AG04450 (cell line): ENCODE measurements at regions of chr1 and their contacts with region 1.

Region 1: GRCh38 chr1:185720633-185721272 is 13.4 kb upstream of the HMCN1 start:
- DNase-seq: no peak
- H3K4me3 ChIP-seq: no peak overlapping the region
- H3K27ac ChIP-seq: no peak overlapping the region
- H3K27me3 ChIP-seq: no peaks in the 10 kb centered on the region
- CTCF ChIP-seq: peak; percentile 61

Region 2: DNA sequence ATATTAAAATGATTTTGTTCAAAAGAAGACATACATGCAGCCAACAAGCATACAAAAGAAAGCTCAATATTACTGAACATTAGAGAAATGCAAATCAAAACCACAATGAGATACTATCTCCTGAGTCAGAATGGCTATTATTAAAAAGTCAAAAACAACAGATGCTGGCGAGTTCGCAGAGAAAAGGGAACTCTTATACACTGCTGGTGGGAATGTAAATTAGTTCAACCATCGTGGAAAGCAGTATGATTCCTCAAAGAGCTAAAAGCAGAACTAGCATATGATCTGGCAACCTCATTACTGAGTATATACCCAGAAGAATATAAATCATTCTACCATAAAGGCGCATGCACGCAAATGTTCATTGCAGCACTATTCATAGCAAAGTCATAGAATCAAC is 112.6 kb before region 1 on chr1:
- CTCF ChIA-PET with region 1: no interaction called
- POLR2A ChIA-PET with region 1: no interaction called
- DNase-seq: no peak
- H3K4me3 ChIP-seq: no peak overlapping the region
- H3K27ac ChIP-seq: no peak overlapping the region
- H3K27me3 ChIP-seq: no peaks in the 10 kb centered on the region
- CTCF ChIP-seq: no peak

Region 3: GRCh38 chr1:185694081-185694480 is 26.7 kb before region 1 on chr1:
- CTCF ChIA-PET with region 1: interaction called, 16 read pairs
- POLR2A ChIA-PET with region 1: no interaction called
- DNase-seq: no peak
- H3K4me3 ChIP-seq: no peak overlapping the region
- H3K27ac ChIP-seq: no peak overlapping the region
- H3K27me3 ChIP-seq: no peaks in the 10 kb centered on the region
- CTCF ChIP-seq: no peak

Region 4: DNA sequence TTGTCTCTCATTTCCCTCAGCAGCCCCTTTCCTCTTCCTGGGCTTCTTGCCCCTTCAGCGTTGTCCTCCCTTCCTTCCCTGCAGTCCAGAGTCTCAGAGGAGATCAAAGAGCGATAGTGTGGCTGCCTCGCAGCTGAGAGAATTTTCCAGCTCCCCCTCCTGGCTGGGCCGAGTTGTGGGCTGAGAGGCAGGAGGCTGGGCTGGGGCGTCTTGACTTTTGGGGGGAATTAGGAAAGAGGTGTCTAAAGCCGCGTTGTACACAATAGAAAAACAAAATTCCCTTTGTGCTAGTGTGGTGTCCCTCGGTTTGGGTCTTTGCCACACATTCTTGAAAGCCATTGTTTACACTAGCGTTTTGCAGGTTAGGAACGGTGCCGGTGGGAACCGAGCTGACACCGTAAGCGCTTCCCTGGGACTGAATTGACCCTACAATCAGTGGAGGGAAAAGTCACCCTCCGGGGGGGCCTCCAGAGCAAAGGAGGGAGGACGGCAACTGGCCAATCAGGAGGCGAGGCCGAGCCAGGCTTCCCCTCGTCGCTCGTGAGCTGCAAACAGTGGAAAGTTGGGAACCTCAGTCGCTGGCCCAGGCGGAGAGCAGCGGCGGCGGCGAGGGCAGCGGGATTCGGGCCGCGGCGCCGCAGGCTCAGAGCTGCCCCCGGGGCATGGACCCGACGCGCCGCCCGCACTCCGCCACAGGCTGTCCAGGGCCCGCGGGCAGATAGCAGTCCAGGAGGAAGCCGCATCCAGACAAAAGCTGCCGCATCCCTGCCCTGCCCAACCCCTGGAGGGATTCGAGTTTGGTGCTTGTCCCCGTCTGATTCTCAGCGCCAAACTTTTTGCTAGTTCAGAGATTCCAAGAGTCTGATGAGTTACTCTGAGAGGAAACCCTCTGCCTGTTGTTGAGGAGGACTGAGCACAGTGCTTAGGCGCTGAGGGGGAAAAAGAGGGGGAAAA is 13.3 kb after region 1 on chr1 and contains the start of gene HMCN1:
- CTCF ChIA-PET with region 1: interaction called, 32 read pairs
- POLR2A ChIA-PET with region 1: no interaction called
- DNase-seq: no peak
- H3K4me3 ChIP-seq: peak within 1 kb of the TSS; percentile 64
- H3K27ac ChIP-seq: peak within 1 kb of the TSS; percentile 55
- H3K27me3 ChIP-seq: no peaks in the 10 kb centered on the region
- CTCF ChIP-seq: peak; percentile 59
- polyA plus RNA-seq, gene HMCN1: 19.7 and 20.9 TPM in 2 replicates

Region 5: DNA sequence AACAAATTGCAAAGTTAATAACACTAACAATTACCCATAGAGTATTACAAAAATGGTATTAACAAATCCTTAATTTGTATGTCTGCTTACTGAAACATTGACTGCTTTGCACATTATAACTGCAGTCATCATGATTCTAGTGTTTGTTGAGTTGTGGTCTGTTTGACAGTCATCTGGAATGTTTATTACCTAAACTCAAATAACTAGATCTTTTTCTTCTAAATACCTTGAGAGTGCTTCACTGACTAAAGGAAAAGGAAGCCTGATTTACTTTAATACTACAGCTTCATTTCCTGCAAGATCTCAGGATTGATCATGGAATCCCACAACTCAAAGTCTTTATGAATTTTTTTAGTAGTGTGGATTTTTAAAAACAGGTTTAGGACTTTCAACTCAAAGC is 83.5 kb after region 1 on chr1:
- CTCF ChIA-PET with region 1: no interaction called
- POLR2A ChIA-PET with region 1: no interaction called
- DNase-seq: no peak
- H3K4me3 ChIP-seq: no peak overlapping the region
- H3K27ac ChIP-seq: no peak overlapping the region
- H3K27me3 ChIP-seq: no peaks in the 10 kb centered on the region
- CTCF ChIP-seq: no peak

Region 6: GRCh38 chr1:185861630-185862029 is 140.9 kb after region 1 on chr1:
- CTCF ChIA-PET with region 1: interaction called, 10 read pairs
- POLR2A ChIA-PET with region 1: no interaction called
- DNase-seq: no peak
- H3K4me3 ChIP-seq: no peak overlapping the region
- H3K27ac ChIP-seq: no peak overlapping the region
- H3K27me3 ChIP-seq: no peaks in the 10 kb centered on the region
- CTCF ChIP-seq: no peak

Region 7: DNA sequence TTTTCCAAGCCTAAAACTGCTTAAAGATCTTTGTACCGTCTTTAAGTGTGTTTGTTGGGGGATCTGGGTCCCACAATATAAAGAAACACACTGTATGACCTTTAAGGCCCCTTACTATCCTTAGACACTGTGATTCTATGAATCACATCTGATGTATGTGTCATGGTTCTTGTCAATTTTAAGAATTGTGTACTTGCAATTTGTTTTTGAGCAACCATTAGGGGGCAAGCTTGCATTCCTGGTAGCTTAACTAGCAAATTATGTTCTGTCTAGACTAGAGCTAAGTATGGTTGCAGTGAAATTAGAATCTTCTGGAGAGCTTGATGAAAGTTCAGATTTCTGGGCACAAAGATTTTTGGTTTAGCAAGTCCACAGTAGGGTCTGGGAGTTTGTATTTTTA is 434.8 kb after region 1 on chr1:
- CTCF ChIA-PET with region 1: interaction called, 11 read pairs
- POLR2A ChIA-PET with region 1: no interaction called
- DNase-seq: peak; percentile 34
- H3K4me3 ChIP-seq: no peak overlapping the region
- H3K27ac ChIP-seq: no peak overlapping the region
- H3K27me3 ChIP-seq: no peaks in the 10 kb centered on the region
- CTCF ChIP-seq: peak; percentile 80

Region 8: GRCh38 chr1:186212544-186213226 is 491.9 kb after region 1 on chr1:
- CTCF ChIA-PET with region 1: interaction called, 70 read pairs
- POLR2A ChIA-PET with region 1: no interaction called
- DNase-seq: peak; percentile 94
- H3K4me3 ChIP-seq: no peak overlapping the region
- H3K27ac ChIP-seq: no peak overlapping the region
- H3K27me3 ChIP-seq: no peaks in the 10 kb centered on the region
- CTCF ChIP-seq: peak; percentile 94